OCI-LY7 (cell line): ENCODE measurements at regions of chr20 and their contacts with region 1.

Region 1: GRCh38 chr20:33005132-33005566 is 916 bp upstream of the SUN5 start:
- DNase-seq: peak; percentile 41
- H3K4me3 ChIP-seq: no peak overlapping the region
- H3K27ac ChIP-seq: no peak overlapping the region
- H3K4me1 ChIP-seq: no peaks in the 10 kb centered on the region
- CTCF ChIP-seq: peak; percentile 81

Region 2: GRCh38 chr20:32894026-32894483 is 111.1 kb before region 1 on chr20:
- CTCF ChIA-PET with region 1: no interaction called
- POLR2A ChIA-PET with region 1: no interaction called
- intact Hi-C with region 1: no loop called
- DNase-seq: peak; percentile 34
- H3K4me3 ChIP-seq: no peak overlapping the region
- H3K27ac ChIP-seq: no peak overlapping the region
- H3K4me1 ChIP-seq: no peaks in the 10 kb centered on the region
- CTCF ChIP-seq: peak; percentile 68

Region 3: GRCh38 chr20:33181482-33182093 is 176.4 kb after region 1 on chr20:
- CTCF ChIA-PET with region 1: no interaction called
- POLR2A ChIA-PET with region 1: interaction called, 10 read pairs
- intact Hi-C with region 1: no loop called
- DNase-seq: no peak
- H3K4me3 ChIP-seq: no peak overlapping the region
- H3K27ac ChIP-seq: no peak overlapping the region
- H3K4me1 ChIP-seq: no peaks in the 10 kb centered on the region
- CTCF ChIP-seq: no peak